A549 (cell line): ENCODE measurements at regions of chr15 and their contacts with region 1.

Region 1: GRCh38 chr15:50145451-50145872 is 26.4 kb upstream of the ATP8B4 start:
- DNase-seq: peak; percentile 65 to 84
- ATAC-seq: peak; percentile 88 to 93; a peak in 5 of 6 replicates
- H3K4me3 ChIP-seq: no peak overlapping the region
- H3K27ac ChIP-seq: peak overlapping the region; percentile 49 to 68
- H3K4me1 ChIP-seq: peaks cover 28% of the 10 kb centered on the region
- CTCF ChIP-seq: peak; percentile 93
- EP300 ChIP-seq: no peak
- POLR2A ChIP-seq: no peak
- RAD21 ChIP-seq: peak; percentile 91 to 97

Region 2: GRCh38 chr15:49235446-49236124 is 909.9 kb before region 1 on chr15:
- CTCF ChIA-PET with region 1: interaction called, 10 read pairs
- POLR2A ChIA-PET with region 1: no interaction called
- DNase-seq: peak in 1 of 2 experiments; percentile 56
- ATAC-seq: peak in 1 of 2 experiments; percentile 85; a peak in 3 of 6 replicates
- H3K4me3 ChIP-seq: no peak overlapping the region
- H3K27ac ChIP-seq: peak overlapping the region in 1 of 2 experiments; percentile 50; a peak in 2 of 6 replicates
- H3K4me1 ChIP-seq: peaks cover 9% of the 10 kb centered on the region
- CTCF ChIP-seq: peak; percentile 67
- EP300 ChIP-seq: no peak
- POLR2A ChIP-seq: no peak
- RAD21 ChIP-seq: peak; percentile 78 to 82

Region 3: GRCh38 chr15:50051803-50052419 is 93.6 kb before region 1 on chr15:
- CTCF ChIA-PET with region 1: interaction called, 25 read pairs
- POLR2A ChIA-PET with region 1: no interaction called
- DNase-seq: peak; percentile 49 to 87
- ATAC-seq: peak; percentile 90 to 95
- H3K4me3 ChIP-seq: no peak overlapping the region; the same call in 2 of the 3 replicates
- H3K27ac ChIP-seq: peak overlapping the region; percentile 61 to 77
- H3K4me1 ChIP-seq: peaks cover 21% of the 10 kb centered on the region
- CTCF ChIP-seq: peak; percentile 97
- EP300 ChIP-seq: peak in 1 of 2 experiments; percentile 24; a peak in 1 of 5 replicates
- POLR2A ChIP-seq: no peak
- RAD21 ChIP-seq: peak; percentile 98 to 99

Region 4: DNA sequence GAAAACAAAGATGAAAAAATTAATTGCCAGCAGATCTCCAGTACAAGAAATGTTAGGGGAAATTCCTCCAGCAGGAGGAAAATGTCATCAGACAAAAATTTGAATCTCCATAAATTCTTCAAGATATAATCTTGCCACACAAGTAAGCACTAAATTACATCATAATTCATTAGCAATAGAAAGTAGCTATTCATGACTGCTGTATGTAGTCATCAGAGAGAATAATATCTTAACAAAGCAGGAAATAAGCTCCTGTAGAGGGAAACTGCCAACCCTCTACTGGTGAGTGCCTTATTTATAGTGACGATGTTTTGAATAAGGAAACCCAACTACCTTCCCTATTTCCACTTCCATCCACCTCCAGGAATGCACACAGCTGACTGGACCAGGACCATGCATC is 20.8 kb after region 1 on chr15:
- CTCF ChIA-PET with region 1: interaction called, 26 read pairs
- POLR2A ChIA-PET with region 1: interaction called, 4 read pairs
- DNase-seq: peak; percentile 38 to 71
- ATAC-seq: peak; percentile 77 to 89
- H3K4me3 ChIP-seq: no peak overlapping the region; the same call in 2 of the 3 replicates
- H3K27ac ChIP-seq: peak overlapping the region; percentile 88 to 92
- H3K4me1 ChIP-seq: peaks cover 63% of the 10 kb centered on the region
- CTCF ChIP-seq: no peak
- EP300 ChIP-seq: peak; percentile 22 to 28; a peak in 2 of 5 replicates
- POLR2A ChIP-seq: no peak
- RAD21 ChIP-seq: no peak; a peak in 1 of 5 replicates

Region 5: DNA sequence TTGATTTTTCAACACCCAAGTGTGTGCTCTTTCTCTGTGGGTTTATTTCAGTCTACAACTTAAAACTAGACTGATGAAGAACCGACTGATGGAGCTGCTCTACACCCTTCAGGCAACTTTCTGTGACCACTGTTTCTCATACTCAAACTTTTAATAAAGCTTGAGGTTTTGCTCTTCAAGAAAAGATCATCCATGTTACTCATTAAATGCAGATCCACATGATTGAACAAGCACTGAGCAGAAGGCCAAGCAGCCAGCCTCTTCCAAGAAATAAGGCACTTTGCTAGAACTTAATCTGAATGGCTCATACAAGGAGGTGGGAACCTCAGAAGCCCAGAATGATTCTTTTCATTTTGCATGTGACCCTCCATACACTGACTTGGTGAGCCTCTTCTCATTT is 45.3 kb after region 1 on chr15:
- CTCF ChIA-PET with region 1: interaction called, 43 read pairs
- POLR2A ChIA-PET with region 1: no interaction called
- DNase-seq: no peak
- ATAC-seq: no peak
- H3K4me3 ChIP-seq: no peak overlapping the region
- H3K27ac ChIP-seq: no peak overlapping the region
- H3K4me1 ChIP-seq: peaks cover 18% of the 10 kb centered on the region
- CTCF ChIP-seq: no peak
- EP300 ChIP-seq: no peak
- POLR2A ChIP-seq: no peak
- RAD21 ChIP-seq: no peak

Region 6: DNA sequence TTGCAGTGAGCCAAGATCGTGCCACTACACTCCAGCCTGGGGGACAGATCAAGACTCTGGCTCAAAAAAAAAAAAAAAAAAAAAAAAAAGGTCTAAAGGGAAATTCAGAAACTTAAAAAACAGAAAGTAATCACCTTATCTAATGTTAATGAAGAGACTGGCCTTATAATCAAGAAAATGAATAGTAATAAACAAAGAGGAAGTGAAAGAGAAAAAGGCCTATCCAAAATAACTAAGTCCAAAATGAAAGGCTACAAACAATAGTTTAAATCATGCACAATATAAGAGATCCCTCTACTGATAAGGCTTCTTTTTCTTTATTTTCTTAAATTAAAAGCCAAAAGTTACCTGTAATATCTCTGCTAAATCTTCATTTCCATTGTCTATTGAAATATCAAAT is 157.1 kb after region 1 on chr15:
- CTCF ChIA-PET with region 1: interaction called, 10 read pairs
- POLR2A ChIA-PET with region 1: no interaction called
- DNase-seq: no peak
- ATAC-seq: no peak
- H3K4me3 ChIP-seq: no peak overlapping the region
- H3K27ac ChIP-seq: no peak overlapping the region
- H3K4me1 ChIP-seq: no peaks in the 10 kb centered on the region
- CTCF ChIP-seq: no peak
- EP300 ChIP-seq: no peak
- POLR2A ChIP-seq: no peak
- RAD21 ChIP-seq: no peak

Region 7: DNA sequence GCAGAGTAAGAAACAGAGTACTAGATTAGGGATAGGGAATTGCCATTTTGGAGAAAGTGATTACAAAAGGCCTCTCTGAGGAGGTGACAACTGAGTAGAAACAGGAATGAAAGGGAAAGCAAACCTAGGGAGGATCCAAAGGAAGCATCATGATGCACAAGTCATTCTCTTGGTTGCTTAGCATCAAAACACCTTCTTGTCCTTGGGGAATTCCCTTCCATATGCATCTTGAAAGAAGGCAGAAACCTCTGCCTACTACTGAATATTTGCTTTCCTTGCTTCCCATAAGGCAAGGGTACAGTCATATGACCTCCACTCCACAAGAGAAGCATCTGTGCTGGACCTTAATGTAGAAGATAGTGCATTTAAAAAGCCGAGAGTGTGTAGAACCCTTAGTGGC is 185.5 kb after region 1 on chr15:
- CTCF ChIA-PET with region 1: interaction called, 10 read pairs
- POLR2A ChIA-PET with region 1: no interaction called
- DNase-seq: peak in 1 of 2 experiments; percentile 13
- ATAC-seq: peak; percentile 39 to 49; a peak in 4 of 6 replicates
- H3K4me3 ChIP-seq: no peak overlapping the region
- H3K27ac ChIP-seq: no peak overlapping the region
- H3K4me1 ChIP-seq: no peaks in the 10 kb centered on the region
- CTCF ChIP-seq: no peak
- EP300 ChIP-seq: no peak
- POLR2A ChIP-seq: no peak
- RAD21 ChIP-seq: no peak

Region 8: GRCh38 chr15:50523851-50524251 is 378.4 kb after region 1 on chr15:
- CTCF ChIA-PET with region 1: no interaction called
- POLR2A ChIA-PET with region 1: no interaction called
- DNase-seq: no peak
- ATAC-seq: no peak
- H3K4me3 ChIP-seq: no peak overlapping the region
- H3K27ac ChIP-seq: no peak overlapping the region
- H3K4me1 ChIP-seq: no peaks in the 10 kb centered on the region
- CTCF ChIP-seq: no peak
- EP300 ChIP-seq: no peak
- POLR2A ChIP-seq: no peak
- RAD21 ChIP-seq: no peak